Activated B cell treated with CpG ODN at 0.5 μM for 24 hours (primary cell): ENCODE measurements at regions of chr1 and their contacts with region 1.

Region 1: GRCh38 chr1:41360993-41361753 is at the start of gene FOXO6:
- DNase-seq: peak; percentile 90
- ATAC-seq: peak; percentile 89
- H3K4me3 Mint-ChIP-seq: peak within 1 kb of the TSS; percentile 76
- H3K27ac Mint-ChIP-seq: peak within 1 kb of the TSS; percentile 28
- H3K4me1 Mint-ChIP-seq: peaks cover 26% of the 10 kb centered on the region
- H3K27me3 Mint-ChIP-seq: peaks cover 32% of the 10 kb centered on the region
- CTCF ChIP-seq: no peak
- total RNA-seq, gene FOXO6: 0.12 and 0.55 TPM in 2 replicates

Region 2: GRCh38 chr1:41149570-41149969 is 211.6 kb before region 1 on chr1:
- CTCF ChIA-PET with region 1: no interaction called
- POLR2A ChIA-PET with region 1: no interaction called
- intact Hi-C with region 1: no loop called
- DNase-seq: no peak
- ATAC-seq: no peak
- H3K4me3 Mint-ChIP-seq: no peak overlapping the region
- H3K27ac Mint-ChIP-seq: no peak overlapping the region
- H3K4me1 Mint-ChIP-seq: no peaks in the 10 kb centered on the region
- H3K27me3 Mint-ChIP-seq: no peaks in the 10 kb centered on the region
- CTCF ChIP-seq: no peak

Region 3: GRCh38 chr1:41241782-41242341 is 119.3 kb before region 1 on chr1 and contains the start of gene SCMH1:
- CTCF ChIA-PET with region 1: no interaction called
- POLR2A ChIA-PET with region 1: no interaction called
- intact Hi-C with region 1: loop called (anchors 1 kb)
- DNase-seq: peak; percentile 66
- ATAC-seq: peak; percentile 65
- H3K4me3 Mint-ChIP-seq: peak within 1 kb of the TSS; percentile 85
- H3K27ac Mint-ChIP-seq: peak within 1 kb of the TSS; percentile 86
- H3K4me1 Mint-ChIP-seq: peaks cover 18% of the 10 kb centered on the region
- H3K27me3 Mint-ChIP-seq: no peaks in the 10 kb centered on the region
- CTCF ChIP-seq: no peak
- total RNA-seq, gene SCMH1: 25.1 and 28.0 TPM in 2 replicates

Region 4: GRCh38 chr1:41382478-41383090 is 21.4 kb after region 1 on chr1:
- CTCF ChIA-PET with region 1: no interaction called
- POLR2A ChIA-PET with region 1: interaction called, 3 read pairs
- intact Hi-C with region 1: loop called (anchors 1 kb)
- DNase-seq: no peak
- ATAC-seq: no peak
- H3K4me3 Mint-ChIP-seq: peak overlapping the region; percentile 42
- H3K27ac Mint-ChIP-seq: no peak overlapping the region
- H3K4me1 Mint-ChIP-seq: peaks cover 24% of the 10 kb centered on the region
- H3K27me3 Mint-ChIP-seq: peaks cover 47% of the 10 kb centered on the region
- CTCF ChIP-seq: no peak

Region 5: DNA sequence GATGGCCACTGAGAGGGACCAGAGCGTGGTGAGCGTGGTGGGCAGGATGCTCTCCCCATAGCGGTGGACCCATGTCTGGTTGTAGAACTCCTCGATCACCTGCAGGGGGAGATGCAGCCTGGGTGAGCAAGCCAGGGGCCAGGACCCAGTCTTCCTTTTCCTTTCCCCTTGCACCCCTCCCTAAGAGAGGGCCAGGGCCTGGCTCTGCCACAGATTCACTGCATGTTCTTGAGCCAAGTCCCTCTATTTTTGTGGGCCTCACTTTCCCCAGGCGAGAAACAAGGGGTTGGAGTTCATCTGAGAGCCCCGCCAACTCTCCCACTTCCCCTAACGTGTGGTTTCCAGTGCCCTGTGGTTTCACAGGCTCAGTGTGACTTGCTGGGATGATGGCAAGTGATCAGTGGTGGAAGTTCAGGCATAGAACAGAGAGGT is 1570.0 kb after region 1 on chr1:
- CTCF ChIA-PET with region 1: no interaction called
- POLR2A ChIA-PET with region 1: no interaction called
- intact Hi-C with region 1: loop called (anchors 10 kb)
- DNase-seq: peak; percentile 47
- ATAC-seq: peak; percentile 16
- H3K4me3 Mint-ChIP-seq: peak overlapping the region; percentile 69
- H3K27ac Mint-ChIP-seq: peak overlapping the region; percentile 91
- H3K4me1 Mint-ChIP-seq: peaks cover 75% of the 10 kb centered on the region
- H3K27me3 Mint-ChIP-seq: no peaks in the 10 kb centered on the region
- CTCF ChIP-seq: no peak